Calu3 (cell line): ENCODE measurements at regions of chr9 and their contacts with region 1.

Region 1: GRCh38 chr9:70924895-70925547 is 196.4 kb downstream of the TRPM3 start:
- DNase-seq: peak; percentile 34
- H3K4me3 Mint-ChIP-seq: no peak overlapping the region
- H3K27ac Mint-ChIP-seq: no peak overlapping the region
- H3K4me1 Mint-ChIP-seq: peaks cover 9% of the 10 kb centered on the region
- H3K27me3 Mint-ChIP-seq: no peaks in the 10 kb centered on the region
- CTCF ChIP-seq: peak; percentile 53

Region 2: DNA sequence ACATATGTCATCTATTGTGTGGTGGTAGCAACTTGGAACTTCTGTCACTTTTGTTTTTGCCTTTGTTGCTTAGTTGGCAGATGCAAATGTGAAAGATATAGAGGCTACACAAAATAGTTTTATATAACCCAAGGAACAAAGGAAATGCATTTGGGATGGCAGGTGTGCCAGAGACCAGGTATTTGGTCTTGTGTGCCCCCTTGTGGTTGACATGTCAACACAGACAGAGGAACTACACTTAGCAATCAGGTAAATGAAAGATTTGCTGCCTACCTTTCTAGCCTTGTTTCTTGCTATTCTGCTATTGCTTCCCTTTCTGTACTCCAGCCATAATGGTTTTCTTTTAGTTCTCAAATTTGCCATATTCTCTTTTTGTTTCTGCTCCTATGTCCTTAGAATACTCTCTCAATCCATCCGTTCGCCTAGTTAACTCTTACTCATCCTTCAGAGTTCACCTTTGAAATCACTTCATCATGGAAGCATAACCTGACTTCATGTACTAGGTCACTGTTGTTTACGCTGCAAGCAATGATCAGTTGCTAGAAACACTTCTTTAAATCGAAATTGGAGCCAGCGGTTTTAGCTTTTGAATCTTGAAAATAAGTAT is 76.9 kb after region 1 on chr9:
- CTCF ChIA-PET with region 1: interaction called, 3 read pairs
- intact Hi-C with region 1: loop called (anchors 1 kb)
- DNase-seq: peak; percentile 63
- H3K4me3 Mint-ChIP-seq: no peak overlapping the region
- H3K27ac Mint-ChIP-seq: no peak overlapping the region
- H3K4me1 Mint-ChIP-seq: no peaks in the 10 kb centered on the region
- H3K27me3 Mint-ChIP-seq: no peaks in the 10 kb centered on the region
- CTCF ChIP-seq: peak; percentile 66

Region 3: DNA sequence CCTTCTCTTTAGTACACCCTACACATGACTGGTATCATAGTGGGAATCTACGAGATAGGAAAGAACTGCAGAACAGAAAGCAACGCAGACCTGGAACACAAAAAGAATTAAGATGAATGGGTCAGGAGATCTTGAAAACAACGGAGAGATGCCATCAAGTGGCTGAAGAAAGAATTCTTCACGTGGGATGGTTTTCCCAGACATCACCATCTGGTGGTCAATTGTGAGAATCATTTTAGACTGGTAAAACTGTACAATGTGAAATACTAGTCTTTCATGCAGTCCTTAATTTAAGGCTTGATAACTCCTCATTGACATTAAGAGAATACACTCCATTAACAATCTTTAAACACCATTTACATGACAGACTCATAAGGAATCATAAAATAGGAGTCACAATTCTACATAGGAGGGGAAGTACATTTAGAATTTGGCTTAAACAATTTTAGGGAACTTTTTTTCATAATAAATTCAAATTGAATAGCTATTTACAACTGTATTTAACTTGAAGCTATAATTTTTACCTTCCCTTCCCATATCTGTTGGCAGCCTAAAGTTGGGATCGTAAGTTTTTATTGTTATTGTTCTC is 324.8 kb after region 1 on chr9:
- CTCF ChIA-PET with region 1: no interaction called
- intact Hi-C with region 1: loop called (anchors 2 kb)
- DNase-seq: peak; percentile 19
- H3K4me3 Mint-ChIP-seq: no peak overlapping the region
- H3K27ac Mint-ChIP-seq: no peak overlapping the region
- H3K4me1 Mint-ChIP-seq: no peaks in the 10 kb centered on the region
- H3K27me3 Mint-ChIP-seq: peaks cover 46% of the 10 kb centered on the region
- CTCF ChIP-seq: peak; percentile 39